ENCODE measurements at regions of chr10 and their contacts with region 1.

Region 1: DNA sequence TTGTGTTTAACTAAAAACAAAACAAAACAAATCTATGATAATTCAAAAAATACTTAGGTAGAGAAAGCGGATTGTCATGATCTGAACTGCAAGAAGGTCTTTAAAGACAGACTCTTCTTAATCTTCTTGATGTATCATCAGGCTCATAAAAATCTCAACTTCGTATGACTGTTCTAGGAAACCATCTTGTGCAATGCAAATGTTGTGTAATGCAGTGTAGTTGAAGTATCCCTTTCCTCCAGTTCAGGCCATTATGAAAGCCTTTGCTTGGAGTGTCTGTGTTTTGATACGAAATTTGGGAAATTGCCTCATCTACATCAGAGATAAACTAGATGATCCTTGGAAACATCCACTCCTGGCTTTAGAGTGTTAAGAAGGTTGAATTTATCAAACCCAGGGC is 30.9 kb downstream of the CDK1 start:
- DNase-seq: no peak
- ATAC-seq: no peak
- H3K4me3 ChIP-seq: no peak overlapping the region
- H3K27ac ChIP-seq: no peak overlapping the region
- H3K4me1 ChIP-seq: no peaks in the 10 kb centered on the region
- H3K27me3 ChIP-seq: no peaks in the 10 kb centered on the region

Region 2: DNA sequence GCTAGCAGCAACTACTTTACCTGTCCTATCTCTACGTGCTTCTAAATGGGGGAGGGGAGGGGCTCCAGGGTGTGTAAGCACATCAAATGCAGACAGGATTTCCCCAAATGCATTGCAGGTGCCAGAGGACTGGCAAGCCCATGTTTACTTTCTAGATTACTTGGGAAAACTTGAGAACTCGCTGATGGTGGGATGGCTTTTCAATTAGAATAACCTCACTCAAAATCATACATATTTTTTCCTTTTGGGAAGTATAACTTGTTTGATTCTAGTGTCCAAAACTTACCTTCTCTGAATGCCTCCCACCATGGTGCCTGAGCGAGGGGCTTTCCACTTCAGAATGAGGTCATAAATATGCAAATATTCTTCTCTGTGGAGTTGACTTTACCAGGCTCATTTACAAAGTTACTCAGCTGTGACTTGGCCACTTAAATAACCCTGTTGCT is 326.1 kb after region 1 on chr10:
- intact Hi-C with region 1: loop called in 1 of 2 experiments (anchors 10 kb)
- DNase-seq: no peak
- ATAC-seq: no peak
- H3K4me3 ChIP-seq: no peak overlapping the region
- H3K27ac ChIP-seq: no peak overlapping the region
- H3K4me1 ChIP-seq: no peaks in the 10 kb centered on the region
- H3K27me3 ChIP-seq: no peaks in the 10 kb centered on the region

Region 3: DNA sequence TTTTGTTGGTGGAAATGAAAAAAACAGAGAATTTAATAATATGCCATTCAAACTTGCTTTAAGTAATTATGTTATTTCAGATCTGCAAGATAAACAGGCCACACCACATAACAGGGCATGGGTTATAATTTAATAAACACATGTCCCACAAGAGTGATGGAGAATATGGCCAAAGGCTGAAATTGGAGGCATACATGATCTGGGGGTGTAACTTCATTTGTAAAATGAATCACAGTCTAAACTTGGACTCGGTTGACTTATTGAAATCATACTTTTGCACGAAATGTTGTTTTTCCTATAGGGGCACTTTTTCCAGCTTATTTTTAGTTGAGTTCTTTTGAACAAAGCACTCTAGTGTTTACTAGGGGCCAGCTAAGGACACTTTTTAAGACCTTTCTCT is 492.4 kb after region 1 on chr10:
- intact Hi-C with region 1: no loop called
- DNase-seq: no peak
- ATAC-seq: no peak
- H3K4me3 ChIP-seq: no peak overlapping the region
- H3K27ac ChIP-seq: no peak overlapping the region
- H3K4me1 ChIP-seq: no peaks in the 10 kb centered on the region
- H3K27me3 ChIP-seq: no peaks in the 10 kb centered on the region

Measured in aorta (tissue), 5 donors.